ENCODE measurements at regions of chr2 and their contacts with region 1.

Region 1: GRCh38 chr2:223797811-223798721 is 39.3 kb downstream of the AP1S3 start:
- DNase-seq: peak in 2 of 9 experiments; percentile 41 to 46
- ATAC-seq: no peak
- H3K4me3 ChIP-seq: no peak overlapping the region
- H3K4me3 Mint-ChIP-seq: no peak overlapping the region
- H3K27ac ChIP-seq: no peak overlapping the region
- H3K27ac Mint-ChIP-seq: no peak overlapping the region
- H3K4me1 ChIP-seq: no peaks in the 10 kb centered on the region
- H3K4me1 Mint-ChIP-seq: no peaks in the 10 kb centered on the region
- H3K27me3 ChIP-seq: no peaks in the 10 kb centered on the region
- H3K27me3 Mint-ChIP-seq: no peaks in the 10 kb centered on the region
- CTCF ChIP-seq: no peak

Region 2: GRCh38 chr2:222707689-222708525 is 1090.2 kb before region 1 on chr2:
- CTCF ChIA-PET with region 1: no interaction called
- POLR2A ChIA-PET with region 1: no interaction called
- intact Hi-C with region 1: loop called in 1 of 2 experiments (anchors 5 kb)
- DNase-seq: peak; percentile 49 to 85 (median 71)
- ATAC-seq: peak; percentile 71
- H3K4me3 ChIP-seq: no peak overlapping the region
- H3K4me3 Mint-ChIP-seq: no peak overlapping the region
- H3K27ac ChIP-seq: no peak overlapping the region
- H3K27ac Mint-ChIP-seq: no peak overlapping the region
- H3K4me1 ChIP-seq: no peaks in the 10 kb centered on the region
- H3K4me1 Mint-ChIP-seq: no peaks in the 10 kb centered on the region
- H3K27me3 ChIP-seq: peaks cover 2 to 3% of the 10 kb centered on the region in 2 experiments
- H3K27me3 Mint-ChIP-seq: peaks cover 29% of the 10 kb centered on the region
- CTCF ChIP-seq: peak; percentile 99

Region 3: GRCh38 chr2:222969491-222969890 is 828.6 kb before region 1 on chr2:
- CTCF ChIA-PET with region 1: interaction called, 3 read pairs
- POLR2A ChIA-PET with region 1: no interaction called
- intact Hi-C with region 1: loop called in 1 of 2 experiments (anchors 2 kb)
- DNase-seq: no peak
- ATAC-seq: no peak
- H3K4me3 ChIP-seq: no peak overlapping the region
- H3K4me3 Mint-ChIP-seq: no peak overlapping the region
- H3K27ac ChIP-seq: no peak overlapping the region
- H3K27ac Mint-ChIP-seq: no peak overlapping the region
- H3K4me1 ChIP-seq: no peaks in the 10 kb centered on the region
- H3K4me1 Mint-ChIP-seq: no peaks in the 10 kb centered on the region
- H3K27me3 ChIP-seq: no peaks in the 10 kb centered on the region
- H3K27me3 Mint-ChIP-seq: peaks cover 4% of the 10 kb centered on the region
- CTCF ChIP-seq: no peak

Region 4: GRCh38 chr2:223459328-223459939 is 338.6 kb before region 1 on chr2:
- CTCF ChIA-PET with region 1: no interaction called
- POLR2A ChIA-PET with region 1: no interaction called
- intact Hi-C with region 1: loop called in 1 of 2 experiments (anchors 5 kb)
- DNase-seq: peak in 1 of 9 experiments; percentile 4
- ATAC-seq: no peak
- H3K4me3 ChIP-seq: no peak overlapping the region
- H3K4me3 Mint-ChIP-seq: no peak overlapping the region
- H3K27ac ChIP-seq: no peak overlapping the region
- H3K27ac Mint-ChIP-seq: no peak overlapping the region
- H3K4me1 ChIP-seq: no peaks in the 10 kb centered on the region
- H3K4me1 Mint-ChIP-seq: no peaks in the 10 kb centered on the region
- H3K27me3 ChIP-seq: no peaks in the 10 kb centered on the region
- H3K27me3 Mint-ChIP-seq: no peaks in the 10 kb centered on the region
- CTCF ChIP-seq: no peak

Region 5: GRCh38 chr2:223494987-223495386 is 303.1 kb before region 1 on chr2:
- CTCF ChIA-PET with region 1: no interaction called
- POLR2A ChIA-PET with region 1: no interaction called
- intact Hi-C with region 1: no loop called
- DNase-seq: no peak
- ATAC-seq: no peak
- H3K4me3 ChIP-seq: no peak overlapping the region
- H3K4me3 Mint-ChIP-seq: no peak overlapping the region
- H3K27ac ChIP-seq: no peak overlapping the region
- H3K27ac Mint-ChIP-seq: no peak overlapping the region
- H3K4me1 ChIP-seq: no peaks in the 10 kb centered on the region
- H3K4me1 Mint-ChIP-seq: no peaks in the 10 kb centered on the region
- H3K27me3 ChIP-seq: no peaks in the 10 kb centered on the region
- H3K27me3 Mint-ChIP-seq: no peaks in the 10 kb centered on the region
- CTCF ChIP-seq: no peak

Region 6: DNA sequence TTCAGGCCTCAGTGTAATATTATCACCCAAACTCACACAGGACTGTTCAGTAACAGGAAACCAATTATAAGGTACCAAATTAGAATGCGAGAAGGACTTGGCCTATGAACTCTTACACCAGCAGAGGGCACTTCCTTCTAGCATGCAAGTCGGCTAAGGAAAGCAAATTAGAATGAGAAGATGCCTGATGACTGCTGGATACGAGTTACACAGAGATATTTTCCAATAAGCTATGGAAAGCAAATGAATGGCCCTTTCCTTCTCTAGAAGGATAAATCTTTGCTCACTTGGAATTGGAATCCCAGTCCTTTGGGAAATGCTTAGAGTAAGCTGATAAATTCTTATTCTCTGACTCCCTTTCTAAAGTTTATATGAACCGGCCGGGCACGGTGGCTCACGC is 70.5 kb before region 1 on chr2:
- CTCF ChIA-PET with region 1: interaction called, 15 read pairs
- POLR2A ChIA-PET with region 1: no interaction called
- intact Hi-C with region 1: loop called in 1 of 2 experiments (anchors 2 kb)
- DNase-seq: peak in 7 of 9 experiments; percentile 1 to 73 (median 19)
- ATAC-seq: no peak
- H3K4me3 ChIP-seq: no peak overlapping the region
- H3K4me3 Mint-ChIP-seq: no peak overlapping the region
- H3K27ac ChIP-seq: no peak overlapping the region
- H3K27ac Mint-ChIP-seq: no peak overlapping the region
- H3K4me1 ChIP-seq: no peaks in the 10 kb centered on the region
- H3K4me1 Mint-ChIP-seq: no peaks in the 10 kb centered on the region
- H3K27me3 ChIP-seq: no peaks in the 10 kb centered on the region
- H3K27me3 Mint-ChIP-seq: peaks cover 16% of the 10 kb centered on the region
- CTCF ChIP-seq: peak; percentile 37